PC-9 (cell line): ENCODE measurements at regions of chr11 and their contacts with region 1.

Region 1: DNA sequence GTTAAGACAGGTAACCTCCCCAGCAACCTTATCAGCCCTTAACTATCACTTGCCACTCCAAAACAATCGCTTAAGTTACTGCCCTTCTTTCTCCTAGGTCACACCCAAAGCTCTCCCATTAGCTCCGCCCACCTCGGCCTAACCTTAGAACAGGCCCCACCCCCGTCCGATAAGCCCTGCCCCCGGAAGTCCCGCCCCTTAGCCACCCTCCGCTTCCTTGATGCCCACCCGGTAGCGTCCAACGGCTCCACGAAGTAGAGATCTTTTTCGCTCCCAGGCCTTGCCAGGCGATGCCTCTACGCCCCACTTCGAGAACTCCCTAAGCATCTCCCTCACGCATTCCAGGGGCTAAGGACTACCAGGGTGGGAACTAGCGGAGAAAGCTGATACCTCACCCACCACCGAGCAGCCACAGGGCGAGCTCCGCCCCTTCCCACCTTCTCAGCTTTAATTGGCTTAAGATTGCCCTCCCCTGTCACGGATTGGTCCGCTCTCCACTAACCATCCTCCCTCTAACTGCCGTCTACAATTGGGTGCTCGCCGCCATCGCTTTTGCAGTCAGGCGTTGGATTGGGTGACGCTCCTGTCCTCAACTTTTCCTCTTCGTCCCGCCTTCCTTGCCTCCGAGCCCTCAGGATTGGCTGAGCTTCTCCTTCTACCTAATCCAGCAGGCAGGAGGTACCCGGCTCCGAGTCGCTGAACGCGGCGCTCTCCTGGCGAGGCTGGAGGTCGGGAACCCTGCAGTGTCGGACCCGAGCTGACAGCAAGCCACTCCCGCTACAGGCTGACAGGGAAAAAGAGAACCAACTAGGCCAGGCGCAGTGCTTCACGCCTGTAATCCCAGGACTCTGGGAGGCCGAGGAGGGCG is at the start of gene ZBTB3:
- DNase-seq: peak; percentile 98
- H3K4me3 ChIP-seq: peak within 1 kb of the TSS; percentile 63
- H3K27ac ChIP-seq: peak within 1 kb of the TSS; percentile 46
- H3K4me1 ChIP-seq: peaks cover 17% of the 10 kb centered on the region
- H3K27me3 ChIP-seq: no peaks in the 10 kb centered on the region
- CTCF ChIP-seq: no peak
- total RNA-seq, gene ZBTB3: 16.5 and 17.2 TPM in 2 replicates

Region 2: DNA sequence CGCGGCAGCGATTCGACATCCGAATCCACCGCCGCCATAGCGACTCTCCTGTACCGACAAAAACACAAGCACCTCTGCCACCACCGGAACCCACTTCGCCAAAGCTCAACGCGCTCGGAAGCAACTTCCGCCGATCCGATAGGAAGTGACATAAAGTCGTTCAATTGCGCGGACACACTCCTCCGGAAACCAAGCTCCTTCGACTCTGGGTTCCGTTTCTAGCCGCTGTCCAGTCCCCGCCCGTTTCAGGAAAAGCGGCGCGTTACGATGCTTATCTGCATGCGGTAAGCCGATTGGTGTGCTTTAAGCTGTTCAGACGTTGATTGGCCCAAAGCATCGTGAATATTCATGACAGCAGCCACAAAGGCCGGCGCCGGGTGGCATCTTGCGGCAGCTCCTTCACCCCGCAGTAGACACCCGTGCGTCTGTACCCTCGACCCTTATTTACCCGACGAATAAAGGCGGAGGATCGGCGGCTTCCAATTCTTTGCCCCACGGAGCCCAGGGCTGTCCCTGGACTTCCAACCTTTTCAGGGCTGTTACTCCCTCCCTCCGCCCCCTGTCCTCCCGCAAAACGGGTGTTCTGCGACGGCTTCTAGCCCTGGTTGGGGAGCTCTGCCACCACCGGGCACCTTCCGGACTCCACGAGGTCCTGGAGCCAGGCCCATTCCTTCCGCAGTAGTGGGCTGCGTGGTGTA is 162.4 kb before region 1 on chr11 and contains the start of gene TUT1:
- CTCF ChIA-PET with region 1: interaction called, 5 read pairs
- POLR2A ChIA-PET with region 1: interaction called, 20 read pairs
- intact Hi-C with region 1: no loop called
- DNase-seq: peak; percentile 98 to 100
- H3K4me3 ChIP-seq: peak within 1 kb of the TSS; percentile 84
- H3K27ac ChIP-seq: peak within 1 kb of the TSS; percentile 61
- H3K4me1 ChIP-seq: peaks cover 29% of the 10 kb centered on the region
- H3K27me3 ChIP-seq: no peaks in the 10 kb centered on the region
- CTCF ChIP-seq: no peak
- total RNA-seq, gene TUT1: 39.3 and 40.5 TPM in 2 replicates

Region 3: GRCh38 chr11:62644220-62644619 is 109.8 kb before region 1 on chr11:
- CTCF ChIA-PET with region 1: no interaction called
- POLR2A ChIA-PET with region 1: no interaction called
- intact Hi-C with region 1: no loop called
- DNase-seq: no peak
- H3K4me3 ChIP-seq: no peak overlapping the region
- H3K27ac ChIP-seq: no peak overlapping the region
- H3K4me1 ChIP-seq: peaks cover 15% of the 10 kb centered on the region; the same call in 1 of the 2 replicates
- H3K27me3 ChIP-seq: no peaks in the 10 kb centered on the region
- CTCF ChIP-seq: no peak

Region 4: GRCh38 chr11:62705880-62706849 is 47.8 kb before region 1 on chr11:
- CTCF ChIA-PET with region 1: interaction called, 3 read pairs
- POLR2A ChIA-PET with region 1: interaction called, 10 read pairs
- intact Hi-C with region 1: loop called (anchors 2 kb)
- DNase-seq: peak; percentile 82 to 96
- H3K4me3 ChIP-seq: peak overlapping the region; percentile 89
- H3K27ac ChIP-seq: peak overlapping the region; percentile 79
- H3K4me1 ChIP-seq: peaks cover 30% of the 10 kb centered on the region
- H3K27me3 ChIP-seq: no peaks in the 10 kb centered on the region
- CTCF ChIP-seq: no peak

Region 5: GRCh38 chr11:62855571-62856332 is 101.8 kb after region 1 on chr11:
- CTCF ChIA-PET with region 1: no interaction called
- POLR2A ChIA-PET with region 1: interaction called, 34 read pairs
- intact Hi-C with region 1: no loop called
- DNase-seq: peak; percentile 98 to 99
- H3K4me3 ChIP-seq: peak overlapping the region; percentile 97
- H3K27ac ChIP-seq: peak overlapping the region; percentile 85
- H3K4me1 ChIP-seq: peaks cover 37% of the 10 kb centered on the region
- H3K27me3 ChIP-seq: no peaks in the 10 kb centered on the region
- CTCF ChIP-seq: no peak

Region 6: DNA sequence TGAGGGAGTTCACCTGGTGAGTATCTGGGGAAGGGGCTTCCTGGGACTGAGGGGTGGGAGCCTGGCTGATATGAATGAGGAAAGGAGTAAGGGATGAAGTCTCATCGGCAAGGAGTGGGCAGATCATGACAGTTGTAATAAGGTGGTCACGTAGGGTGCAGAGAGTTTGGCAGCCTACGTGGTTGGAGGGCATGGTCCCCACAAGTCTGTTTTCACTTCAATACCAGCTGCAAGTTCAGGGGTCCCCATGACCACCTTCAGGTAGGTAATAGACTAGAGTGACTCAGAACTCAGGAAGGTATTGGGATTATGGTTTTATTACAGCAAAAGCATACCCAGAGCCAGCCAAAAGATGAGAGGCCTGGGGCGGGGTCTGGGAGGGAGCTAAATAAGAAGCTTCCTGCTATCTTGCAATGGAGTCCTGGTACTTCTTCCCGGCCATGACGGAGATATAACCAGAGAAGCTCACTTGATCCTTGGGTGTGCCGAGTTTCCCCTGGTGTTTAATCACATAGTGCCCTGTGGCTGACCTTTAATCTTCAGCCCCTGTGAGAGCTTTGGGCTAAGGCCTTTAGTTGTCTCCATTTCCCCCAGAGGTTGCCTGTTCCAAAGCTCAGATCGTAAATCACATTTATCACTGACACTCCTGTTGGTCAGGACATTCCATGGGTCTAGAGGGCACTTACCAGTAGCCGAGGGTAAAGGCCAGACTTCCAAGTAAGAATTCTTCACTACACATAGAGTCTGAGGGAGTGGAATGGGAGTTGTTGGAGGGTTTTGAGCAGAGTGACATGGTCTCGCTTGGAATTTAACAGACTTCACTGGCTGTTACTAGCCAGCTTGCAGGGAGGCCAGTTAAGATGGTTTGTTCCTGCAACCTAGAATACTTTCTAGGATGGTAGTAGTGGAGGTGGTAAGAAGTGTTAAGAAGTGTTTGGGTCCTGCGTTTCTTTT is 135.8 kb after region 1 on chr11:
- CTCF ChIA-PET with region 1: no interaction called
- POLR2A ChIA-PET with region 1: interaction called, 34 read pairs
- intact Hi-C with region 1: no loop called
- DNase-seq: peak in 1 of 2 experiments; percentile 61
- H3K4me3 ChIP-seq: no peak overlapping the region
- H3K27ac ChIP-seq: peak overlapping the region; percentile 27
- H3K4me1 ChIP-seq: peaks cover 15% of the 10 kb centered on the region; the same call in 1 of the 2 replicates
- H3K27me3 ChIP-seq: no peaks in the 10 kb centered on the region
- CTCF ChIP-seq: no peak

Region 7: GRCh38 chr11:62922658-62923431 is 168.9 kb after region 1 on chr11:
- CTCF ChIA-PET with region 1: no interaction called
- POLR2A ChIA-PET with region 1: no interaction called
- intact Hi-C with region 1: no loop called
- DNase-seq: peak in 1 of 2 experiments; percentile 40
- H3K4me3 ChIP-seq: no peak overlapping the region
- H3K27ac ChIP-seq: no peak overlapping the region
- H3K4me1 ChIP-seq: no peaks in the 10 kb centered on the region
- H3K27me3 ChIP-seq: peaks cover 88% of the 10 kb centered on the region
- CTCF ChIP-seq: peak; percentile 32; the same call in 1 of the 2 replicates